ENCODE measurements at regions of chr2 and their contacts with region 1.

Region 1: GRCh38 chr2:70616168-70616694 is 62.6 kb upstream of the TGFA start:
- DNase-seq: no peak
- H3K4me3 ChIP-seq: no peak overlapping the region
- H3K27ac ChIP-seq: peak overlapping the region; percentile 40 to 71 (median 61)
- H3K4me1 ChIP-seq: peaks cover 8 to 35% (median 13%) of the 10 kb centered on the region in 3 donors
- H3K27me3 ChIP-seq: peaks cover 0 to 12% (median 0%) of the 10 kb centered on the region in 4 donors
- CTCF ChIP-seq: no peak
- POLR2A ChIP-seq: no peak

Region 2: DNA sequence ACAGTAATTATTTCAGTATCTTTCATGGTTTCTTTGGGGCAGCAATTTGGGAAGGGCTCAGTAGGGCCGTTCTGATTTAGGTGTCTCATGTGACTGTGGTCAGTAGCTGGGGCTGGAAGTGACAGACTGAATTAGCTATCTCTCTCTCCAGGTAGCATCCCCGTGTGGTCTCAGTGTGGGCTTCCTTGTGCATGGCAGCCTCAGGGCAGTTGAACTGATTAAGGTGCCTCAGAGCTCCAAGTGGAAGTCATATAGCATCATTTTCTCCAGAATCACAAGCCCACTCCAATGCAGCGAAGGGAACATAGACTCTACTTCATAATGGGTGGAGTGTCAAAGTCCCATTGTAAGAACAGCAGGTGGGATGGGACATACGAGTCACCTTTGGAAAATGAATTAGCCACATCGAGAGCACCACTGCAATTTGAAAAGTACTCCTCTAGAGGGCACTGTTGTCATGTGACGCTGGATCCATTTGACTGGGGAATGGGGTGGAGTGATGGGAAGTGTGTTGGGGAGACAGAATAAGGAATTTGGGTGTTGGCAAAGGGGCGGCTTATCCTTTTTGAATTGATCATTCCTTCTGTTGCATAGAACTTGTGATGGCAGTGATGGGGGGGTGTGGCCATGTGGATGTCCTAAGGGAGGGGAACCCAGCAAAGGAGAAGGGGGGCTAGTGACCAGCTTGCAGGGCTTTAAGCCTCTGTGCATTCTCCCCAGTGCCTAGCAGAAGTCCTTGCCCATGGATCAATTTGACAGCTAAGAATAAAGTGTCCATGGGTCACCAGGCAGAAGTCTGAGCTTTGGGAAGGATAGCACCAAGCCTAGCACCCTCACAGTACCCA is 275.1 kb before region 1 on chr2:
- intact Hi-C with region 1: loop called (anchors 10 kb)
- DNase-seq: no peak
- H3K4me3 ChIP-seq: no peak overlapping the region
- H3K27ac ChIP-seq: no peak overlapping the region
- H3K4me1 ChIP-seq: peaks cover 0 to 24% (median 0%) of the 10 kb centered on the region in 3 donors
- H3K27me3 ChIP-seq: peaks cover 0 to 21% (median 0%) of the 10 kb centered on the region in 4 donors
- CTCF ChIP-seq: peak in 5 of 6 experiments; percentile 72 to 90 (median 78)
- POLR2A ChIP-seq: no peak

Region 3: DNA sequence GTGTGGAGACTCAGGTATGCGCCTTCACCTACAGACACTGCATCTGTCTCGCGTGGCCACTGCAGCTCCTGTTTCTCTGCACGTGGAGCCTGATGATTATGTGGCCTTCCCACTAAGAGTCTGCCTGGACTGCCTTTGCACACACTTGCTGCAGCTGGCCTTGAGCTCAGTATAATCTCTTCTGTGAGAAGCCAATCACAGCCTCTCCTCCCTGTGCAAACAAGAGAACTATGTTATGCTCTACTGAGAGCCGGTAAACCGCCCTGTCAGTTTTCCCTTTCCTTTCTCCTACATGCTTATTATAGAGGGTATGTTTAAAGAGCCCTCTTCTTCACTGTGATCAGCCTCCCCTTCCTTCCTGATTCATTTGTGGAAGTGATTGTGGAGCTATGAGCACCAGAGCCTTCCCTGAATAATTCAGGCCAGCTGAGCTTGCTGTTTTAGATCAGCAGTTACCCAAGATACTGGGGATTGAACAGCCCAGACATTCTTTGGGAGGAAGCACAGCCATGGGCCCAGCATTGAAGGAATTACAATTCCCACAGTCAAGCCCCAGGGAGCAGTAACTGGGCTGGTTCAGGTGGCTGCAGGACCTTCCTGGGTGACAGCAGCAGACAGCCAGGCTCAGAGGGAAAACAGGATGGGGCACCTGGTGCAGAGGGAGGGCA is 58.9 kb before region 1 on chr2:
- intact Hi-C with region 1: loop called (anchors 5 kb)
- DNase-seq: no peak
- H3K4me3 ChIP-seq: no peak overlapping the region
- H3K27ac ChIP-seq: peak overlapping the region; percentile 5 to 49 (median 24)
- H3K4me1 ChIP-seq: peaks cover 12 to 45% (median 23%) of the 10 kb centered on the region in 3 donors
- H3K27me3 ChIP-seq: peaks cover 0 to 45% (median 2%) of the 10 kb centered on the region in 4 donors
- CTCF ChIP-seq: no peak
- POLR2A ChIP-seq: no peak

Region 4: GRCh38 chr2:70871398-70872211 is 255.4 kb after region 1 on chr2:
- intact Hi-C with region 1: no loop called
- DNase-seq: peak; percentile 35
- H3K4me3 ChIP-seq: peak overlapping the region in 1 of 4 donors; percentile 42
- H3K27ac ChIP-seq: no peak overlapping the region
- H3K4me1 ChIP-seq: peaks cover 4 to 11% (median 6%) of the 10 kb centered on the region in 3 donors
- H3K27me3 ChIP-seq: peaks cover 0 to 67% (median 0%) of the 10 kb centered on the region in 4 donors
- CTCF ChIP-seq: peak; percentile 77 to 89 (median 86)
- POLR2A ChIP-seq: no peak